ENCODE measurements at regions of chr5 and their contacts with region 1.

Region 1: GRCh38 chr5:78533356-78533755 is 115.2 kb downstream of the LHFPL2 start:
- DNase-seq: no peak
- ATAC-seq: peak; percentile 64
- H3K4me3 Mint-ChIP-seq: no peak overlapping the region
- H3K27ac Mint-ChIP-seq: peak overlapping the region; percentile 90; the same call in 1 of the 2 replicates
- H3K4me1 Mint-ChIP-seq: peaks cover 31% of the 10 kb centered on the region
- H3K27me3 Mint-ChIP-seq: no peaks in the 10 kb centered on the region
- CTCF ChIP-seq: 0 out of 2 replicates have a peak, but pooled peaks have one; percentile 19

Region 2: DNA sequence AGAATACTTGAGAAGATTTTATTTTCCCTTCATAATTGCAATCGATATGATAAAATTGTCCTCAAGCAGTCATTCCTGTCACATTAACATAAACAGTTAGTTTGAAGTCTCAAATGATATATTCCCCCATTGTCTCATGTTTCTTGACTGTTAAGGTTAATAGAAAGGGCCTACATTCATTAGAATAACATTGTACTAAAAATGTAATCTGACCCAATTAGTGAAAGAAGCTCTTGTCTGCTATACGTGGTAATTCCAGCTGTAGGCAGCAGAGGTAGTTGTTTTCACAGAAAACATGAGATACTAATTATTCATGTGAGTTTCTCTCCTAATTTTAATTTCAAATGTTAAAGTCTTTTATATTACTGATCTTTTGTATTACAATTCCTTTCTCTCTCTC is 213.0 kb before region 1 on chr5:
- CTCF ChIA-PET with region 1: interaction called, 24 read pairs
- POLR2A ChIA-PET with region 1: no interaction called
- DNase-seq: no peak
- ATAC-seq: peak; percentile 20; the same call in 1 of the 2 replicates
- H3K4me3 Mint-ChIP-seq: no peak overlapping the region
- H3K27ac Mint-ChIP-seq: no peak overlapping the region
- H3K4me1 Mint-ChIP-seq: peaks cover 15% of the 10 kb centered on the region
- H3K27me3 Mint-ChIP-seq: peaks cover 2% of the 10 kb centered on the region; the same call in 1 of the 2 replicates
- CTCF ChIP-seq: 0 out of 2 replicates have a peak, but pooled peaks have one; percentile 15

Region 3: DNA sequence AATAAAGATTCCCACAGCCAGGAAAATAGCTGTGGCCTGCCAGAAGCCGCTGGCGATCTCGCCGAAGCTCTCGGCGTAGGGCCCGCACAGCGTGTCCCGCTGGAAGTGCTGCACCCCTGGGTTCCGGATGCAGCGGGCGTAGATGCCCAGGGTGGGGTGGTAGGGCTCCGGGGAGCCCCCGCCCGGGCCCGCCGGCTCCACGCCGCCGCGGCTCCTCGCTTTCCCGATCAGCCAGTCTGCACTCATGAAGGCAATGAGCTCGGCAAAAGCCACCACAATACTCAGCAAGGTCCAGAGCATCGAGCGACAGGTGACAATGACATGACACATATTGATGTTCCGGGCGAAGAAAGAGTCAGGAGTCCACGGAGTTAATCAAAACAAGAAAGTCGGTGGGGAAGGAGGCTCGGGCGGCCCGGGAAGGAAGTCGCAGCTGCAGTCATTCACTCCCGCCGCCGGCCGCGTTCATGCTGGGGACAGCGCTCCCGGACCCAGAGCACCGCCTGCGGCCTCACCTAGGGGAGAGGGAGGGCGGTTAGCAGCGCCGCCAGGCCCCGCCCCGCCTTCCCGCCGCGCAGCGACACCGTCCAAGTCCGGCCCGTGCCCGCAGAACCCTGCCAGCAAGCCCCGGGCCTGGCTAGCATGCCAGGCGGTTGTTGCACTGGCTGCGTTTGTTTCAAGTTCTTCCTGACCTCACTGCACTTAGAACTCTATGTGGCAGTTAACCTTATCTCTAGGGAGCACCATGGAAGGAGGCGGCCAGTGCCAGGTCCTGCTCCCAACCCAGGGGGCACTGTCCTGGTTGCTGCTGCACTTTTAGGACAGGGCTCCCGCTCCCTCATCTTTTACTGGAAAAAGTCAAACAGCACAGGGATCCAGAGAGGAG is 23.2 kb before region 1 on chr5:
- CTCF ChIA-PET with region 1: interaction called, 19 read pairs
- POLR2A ChIA-PET with region 1: no interaction called
- DNase-seq: peak; percentile 74
- ATAC-seq: peak; percentile 89
- H3K4me3 Mint-ChIP-seq: peak overlapping the region; percentile 64
- H3K27ac Mint-ChIP-seq: peak overlapping the region; percentile 65; the same call in 1 of the 2 replicates
- H3K4me1 Mint-ChIP-seq: peaks cover 52% of the 10 kb centered on the region
- H3K27me3 Mint-ChIP-seq: no peaks in the 10 kb centered on the region
- CTCF ChIP-seq: no peak

Region 4: DNA sequence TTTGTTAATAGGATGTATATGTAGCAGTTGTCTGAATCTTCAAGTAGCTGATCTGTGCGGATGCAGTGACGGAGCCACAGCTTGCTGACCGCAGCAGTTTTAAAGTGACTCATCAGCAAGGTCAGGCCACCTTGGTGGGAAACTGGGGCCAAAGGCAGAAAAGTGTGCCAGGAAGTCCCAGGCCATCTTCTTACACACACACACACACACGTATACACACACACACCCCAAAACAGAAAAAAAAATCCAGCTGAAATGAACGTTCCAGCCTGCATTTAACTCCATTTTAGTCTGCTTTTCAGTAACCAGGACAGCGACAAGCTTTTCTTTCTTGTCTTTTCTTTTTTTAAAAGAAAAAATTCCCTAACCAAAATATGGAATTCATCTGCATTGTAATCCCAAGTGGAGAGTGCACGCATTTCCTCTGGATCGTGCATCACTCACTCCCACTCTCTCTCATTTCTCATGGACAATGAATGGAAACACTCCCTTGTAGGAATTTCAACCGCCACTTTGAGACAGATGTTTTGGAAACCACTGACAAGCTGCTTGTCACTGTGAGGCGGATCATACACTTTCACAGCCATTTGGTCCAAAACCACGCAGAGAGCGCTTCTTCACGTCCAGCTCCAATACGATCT is 11.3 kb after region 1 on chr5:
- CTCF ChIA-PET with region 1: interaction called, 21 read pairs
- POLR2A ChIA-PET with region 1: no interaction called
- DNase-seq: no peak
- ATAC-seq: no peak
- H3K4me3 Mint-ChIP-seq: no peak overlapping the region
- H3K27ac Mint-ChIP-seq: peak overlapping the region; percentile 2; the same call in 1 of the 2 replicates
- H3K4me1 Mint-ChIP-seq: peaks cover 61% of the 10 kb centered on the region
- H3K27me3 Mint-ChIP-seq: no peaks in the 10 kb centered on the region
- CTCF ChIP-seq: no peak